ENCODE measurements at regions of chr15 and their contacts with region 1.

Region 1: GRCh38 chr15:63466378-63467192 is 37.8 kb upstream of the USP3 start:
- DNase-seq: peak; percentile 65
- H3K4me3 Mint-ChIP-seq: no peak overlapping the region
- H3K27ac Mint-ChIP-seq: peak overlapping the region; percentile 55
- H3K4me1 Mint-ChIP-seq: peaks cover 24% of the 10 kb centered on the region
- H3K27me3 Mint-ChIP-seq: peaks cover 33% of the 10 kb centered on the region

Region 2: DNA sequence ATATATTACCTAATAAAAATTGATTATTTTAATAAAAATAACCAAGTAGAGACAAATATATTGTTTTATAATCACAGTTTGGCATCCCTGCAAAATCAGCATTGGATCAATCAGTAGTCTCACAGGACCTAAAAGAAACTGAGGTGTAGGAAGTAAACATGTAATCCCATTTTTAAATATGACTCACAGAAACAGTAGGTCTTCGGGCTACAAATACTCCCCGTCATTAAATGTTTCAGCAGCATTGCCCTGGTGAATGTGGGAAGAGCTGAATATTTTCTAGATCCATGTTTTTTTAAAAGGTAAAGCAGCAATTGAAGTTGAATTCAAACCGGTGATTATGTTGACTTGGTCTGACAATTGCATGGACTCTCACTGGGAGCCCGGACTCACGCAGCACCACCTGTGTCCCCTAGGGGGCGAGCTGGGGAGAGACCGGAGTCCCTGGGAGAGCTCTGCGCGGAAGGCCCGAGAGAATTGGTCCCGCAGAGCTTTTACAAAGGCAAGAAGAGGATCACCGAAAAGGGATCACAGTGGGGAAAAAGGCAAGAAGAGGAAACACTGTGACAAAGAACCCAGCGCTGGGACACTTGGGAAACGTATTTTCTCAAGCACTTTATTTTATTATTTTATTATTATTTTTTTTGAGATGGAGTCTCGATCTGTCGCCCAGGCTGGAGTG is 20.6 kb after region 1 on chr15:
- CTCF ChIA-PET with region 1: interaction called, 14 read pairs
- DNase-seq: peak; percentile 91
- H3K4me3 Mint-ChIP-seq: no peak overlapping the region
- H3K27ac Mint-ChIP-seq: peak overlapping the region; percentile 80
- H3K4me1 Mint-ChIP-seq: peaks cover 80% of the 10 kb centered on the region
- H3K27me3 Mint-ChIP-seq: no peaks in the 10 kb centered on the region

Region 3: GRCh38 chr15:63504247-63504978 is 37.8 kb after region 1 on chr15 and contains the start of gene USP3:
- CTCF ChIA-PET with region 1: interaction called, 29 read pairs
- DNase-seq: peak; percentile 93
- H3K4me3 Mint-ChIP-seq: peak within 1 kb of the TSS; percentile 91
- H3K27ac Mint-ChIP-seq: peak within 1 kb of the TSS; percentile 99
- H3K4me1 Mint-ChIP-seq: peaks cover 76% of the 10 kb centered on the region
- H3K27me3 Mint-ChIP-seq: no peaks in the 10 kb centered on the region

Region 4: GRCh38 chr15:63610200-63610841 is 143.7 kb after region 1 on chr15:
- CTCF ChIA-PET with region 1: interaction called, 23 read pairs
- DNase-seq: peak; percentile 88
- H3K4me3 Mint-ChIP-seq: no peak overlapping the region
- H3K27ac Mint-ChIP-seq: peak overlapping the region; percentile 90
- H3K4me1 Mint-ChIP-seq: peaks cover 42% of the 10 kb centered on the region
- H3K27me3 Mint-ChIP-seq: no peaks in the 10 kb centered on the region